Activated T-helper 1 cell treated with anti-CD3 and anti-CD28 coated beads, Interleukin-12 subunit alpha, Interleukin-12 subunit beta, Interleukin-2, Interleukin-4 antibody, amounts not matched to agents 30 ng/mL and 10 ng/mL and 1 ng/mL, durations not matched to agents 14 hours and 24 hours and 36 hours (primary cell): ENCODE measurements at regions of chr10 and their contacts with region 1.

Region 1: GRCh38 chr10:63465293-63466143 is at the start of gene JMJD1C:
- DNase-seq: peak; percentile 47
- H3K4me3 Mint-ChIP-seq: peak within 1 kb of the TSS; percentile 90
- H3K27ac Mint-ChIP-seq: peak within 1 kb of the TSS; percentile 68
- H3K4me1 Mint-ChIP-seq: peaks cover 21% of the 10 kb centered on the region
- H3K27me3 Mint-ChIP-seq: peaks cover 28% of the 10 kb centered on the region
- total RNA-seq, gene JMJD1C: 47.3 and 48.0 TPM in 2 replicates

Region 2: DNA sequence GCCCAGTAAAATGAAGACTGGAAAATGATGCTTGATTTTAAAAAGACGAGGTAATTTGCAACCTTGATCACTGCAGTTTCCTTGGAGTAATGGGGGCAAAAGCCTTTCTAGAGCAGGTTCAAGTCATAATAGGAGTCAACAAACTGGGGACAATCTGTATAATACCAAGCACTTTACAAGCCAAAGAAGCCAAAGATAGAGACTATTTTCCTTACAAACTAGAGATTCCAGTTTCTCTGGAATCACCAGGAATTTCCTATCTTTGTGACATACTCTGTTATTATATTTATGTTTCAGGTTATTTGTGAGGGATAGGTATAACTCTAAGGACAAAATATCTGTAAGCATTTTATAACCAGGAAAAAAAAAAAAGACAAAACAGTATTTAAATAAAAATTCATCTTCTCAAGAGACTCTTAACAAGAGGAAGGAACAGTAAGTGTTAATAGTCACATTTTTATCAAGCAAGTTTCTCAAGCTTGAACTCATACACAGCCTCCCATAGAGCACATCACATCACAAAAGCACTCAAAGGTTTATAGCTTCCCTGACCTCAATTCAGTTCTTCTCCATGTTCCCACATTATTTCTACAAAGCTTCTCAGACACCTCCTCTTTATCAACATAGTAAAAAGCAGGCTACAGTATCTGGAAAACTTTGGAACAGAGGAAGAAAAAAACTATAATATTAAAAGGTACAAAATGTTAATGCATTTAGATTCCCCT is 18.6 kb before region 1 on chr10:
- intact Hi-C with region 1: no loop called
- DNase-seq: no peak
- H3K4me3 Mint-ChIP-seq: no peak overlapping the region
- H3K27ac Mint-ChIP-seq: no peak overlapping the region
- H3K4me1 Mint-ChIP-seq: no peaks in the 10 kb centered on the region
- H3K27me3 Mint-ChIP-seq: no peaks in the 10 kb centered on the region

Region 3: DNA sequence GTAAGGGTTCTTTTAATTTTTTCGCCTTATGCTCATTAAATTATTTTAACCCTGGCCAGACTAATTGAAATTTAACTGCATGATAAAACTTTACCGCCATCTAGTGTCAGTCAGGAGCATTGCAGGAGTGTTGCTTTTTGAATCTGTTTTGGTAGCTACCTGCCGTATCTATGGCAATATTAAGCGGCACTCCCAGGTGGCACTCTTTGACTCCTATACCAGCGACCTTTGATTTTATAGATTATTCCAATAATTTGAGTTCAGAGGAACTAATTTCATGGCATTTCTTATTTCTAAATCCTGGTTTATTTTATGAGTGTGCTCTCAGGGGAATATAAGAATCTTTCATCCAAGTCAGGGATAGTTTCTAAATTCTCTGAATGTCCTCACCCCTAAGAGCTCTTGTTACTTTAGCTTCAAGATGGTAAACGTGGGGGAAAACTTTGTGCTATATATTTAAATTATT is 254.6 kb after region 1 on chr10:
- intact Hi-C with region 1: loop called (anchors 5 kb)
- DNase-seq: peak; percentile 17
- H3K4me3 Mint-ChIP-seq: peak overlapping the region; percentile 51
- H3K27ac Mint-ChIP-seq: no peak overlapping the region
- H3K4me1 Mint-ChIP-seq: peaks cover 34% of the 10 kb centered on the region
- H3K27me3 Mint-ChIP-seq: peaks cover 4% of the 10 kb centered on the region

Region 4: DNA sequence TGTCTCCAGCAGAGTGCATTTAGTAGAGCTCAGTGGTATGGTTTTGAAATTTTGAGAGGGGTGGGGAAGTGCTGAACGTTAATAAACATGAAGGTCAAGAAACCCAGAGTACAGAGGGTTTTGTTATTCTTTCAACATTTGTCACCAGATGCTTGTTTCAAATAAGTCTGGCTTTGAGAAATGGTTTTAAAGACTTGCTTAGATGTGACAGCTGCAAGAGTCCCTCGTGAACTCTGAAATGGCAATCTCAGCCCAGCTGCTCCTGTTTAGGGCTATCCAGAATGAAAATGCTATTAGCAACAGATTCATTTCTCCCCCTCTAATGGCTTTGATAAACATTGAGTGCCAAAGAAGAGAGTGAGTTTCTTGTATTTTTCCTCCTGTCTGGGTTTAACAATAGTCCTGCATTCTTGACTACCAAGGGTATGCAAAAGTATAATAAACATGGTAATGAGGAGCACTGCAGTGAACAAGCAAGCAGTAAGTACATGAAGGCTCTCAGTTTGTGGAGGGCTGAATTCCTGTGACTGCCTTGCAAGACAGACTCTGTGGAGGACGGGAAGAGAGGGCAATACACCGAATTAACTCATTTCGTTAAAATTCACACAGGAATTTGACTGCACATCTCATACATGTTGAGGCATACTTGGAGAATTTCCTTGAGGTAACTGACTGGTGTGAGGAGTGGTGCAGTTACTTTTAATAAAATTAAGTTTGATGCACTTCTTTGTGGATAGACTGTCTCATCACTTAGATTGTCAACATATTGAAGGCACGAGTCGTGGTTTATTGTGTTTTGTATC is 546.6 kb after region 1 on chr10:
- intact Hi-C with region 1: no loop called
- DNase-seq: no peak
- H3K4me3 Mint-ChIP-seq: no peak overlapping the region
- H3K27ac Mint-ChIP-seq: no peak overlapping the region
- H3K4me1 Mint-ChIP-seq: no peaks in the 10 kb centered on the region
- H3K27me3 Mint-ChIP-seq: no peaks in the 10 kb centered on the region

Region 5: DNA sequence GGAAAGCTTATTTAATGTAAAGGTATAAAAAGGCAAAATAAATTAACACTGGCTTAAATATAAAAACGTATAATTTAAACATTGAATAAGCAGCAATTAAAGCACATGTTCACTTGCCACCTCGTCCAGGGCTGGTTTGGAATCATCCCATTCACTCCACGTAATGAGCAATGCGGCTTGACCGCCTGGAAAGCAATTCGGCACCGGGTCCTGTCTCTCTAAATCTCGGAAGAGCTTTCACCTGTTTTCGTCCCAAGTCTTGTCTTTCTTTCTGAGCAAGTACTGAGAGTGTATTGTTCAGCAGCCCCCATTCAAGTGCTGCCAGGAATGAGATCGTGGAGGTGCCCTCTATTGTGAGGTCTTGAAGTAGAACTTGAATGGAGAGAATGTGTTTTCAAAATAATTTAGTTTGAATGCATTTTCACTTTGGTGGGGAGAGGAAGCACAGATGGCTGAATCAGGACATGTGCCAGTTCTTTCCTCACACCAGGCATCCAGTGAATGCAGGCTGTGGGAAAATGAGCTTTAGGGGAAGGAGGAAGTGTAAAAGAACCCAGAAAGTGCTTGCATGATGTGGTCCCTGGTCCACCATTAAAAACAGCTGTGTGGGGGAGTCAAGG is 570.9 kb after region 1 on chr10:
- intact Hi-C with region 1: no loop called
- DNase-seq: no peak
- H3K4me3 Mint-ChIP-seq: no peak overlapping the region
- H3K27ac Mint-ChIP-seq: no peak overlapping the region
- H3K4me1 Mint-ChIP-seq: peaks cover 6% of the 10 kb centered on the region
- H3K27me3 Mint-ChIP-seq: peaks cover 2% of the 10 kb centered on the region